Activated T-helper 1 cell treated with anti-CD3 and anti-CD28 coated beads, Interleukin-12 subunit alpha, Interleukin-12 subunit beta, Interleukin-2, Interleukin-4 antibody, amounts not matched to agents 30 ng/mL and 10 ng/mL and 1 ng/mL, durations not matched to agents 14 hours and 24 hours and 36 hours (primary cell): ENCODE measurements at regions of chr6 and their contacts with region 1.

Region 1: GRCh38 chr6:109095027-109095834 is at the start of gene CEP57L1:
- DNase-seq: peak; percentile 91
- H3K4me3 Mint-ChIP-seq: peak within 1 kb of the TSS; percentile 95
- H3K27ac Mint-ChIP-seq: peak within 1 kb of the TSS; percentile 97
- H3K4me1 Mint-ChIP-seq: peaks cover 54% of the 10 kb centered on the region
- H3K27me3 Mint-ChIP-seq: no peaks in the 10 kb centered on the region
- total RNA-seq, gene CEP57L1: 13.5 and 16.3 TPM in 2 replicates

Region 2: GRCh38 chr6:108074359-108075144 is 1020.7 kb before region 1 on chr6 and contains the start of gene OSTM1:
- intact Hi-C with region 1: loop called (anchors 2 kb)
- DNase-seq: peak; percentile 92
- H3K4me3 Mint-ChIP-seq: peak within 1 kb of the TSS; percentile 85
- H3K27ac Mint-ChIP-seq: peak within 1 kb of the TSS; percentile 80
- H3K4me1 Mint-ChIP-seq: peaks cover 12% of the 10 kb centered on the region
- H3K27me3 Mint-ChIP-seq: peaks cover 25% of the 10 kb centered on the region
- total RNA-seq, gene OSTM1: 19.9 and 22.5 TPM in 2 replicates

Region 3: DNA sequence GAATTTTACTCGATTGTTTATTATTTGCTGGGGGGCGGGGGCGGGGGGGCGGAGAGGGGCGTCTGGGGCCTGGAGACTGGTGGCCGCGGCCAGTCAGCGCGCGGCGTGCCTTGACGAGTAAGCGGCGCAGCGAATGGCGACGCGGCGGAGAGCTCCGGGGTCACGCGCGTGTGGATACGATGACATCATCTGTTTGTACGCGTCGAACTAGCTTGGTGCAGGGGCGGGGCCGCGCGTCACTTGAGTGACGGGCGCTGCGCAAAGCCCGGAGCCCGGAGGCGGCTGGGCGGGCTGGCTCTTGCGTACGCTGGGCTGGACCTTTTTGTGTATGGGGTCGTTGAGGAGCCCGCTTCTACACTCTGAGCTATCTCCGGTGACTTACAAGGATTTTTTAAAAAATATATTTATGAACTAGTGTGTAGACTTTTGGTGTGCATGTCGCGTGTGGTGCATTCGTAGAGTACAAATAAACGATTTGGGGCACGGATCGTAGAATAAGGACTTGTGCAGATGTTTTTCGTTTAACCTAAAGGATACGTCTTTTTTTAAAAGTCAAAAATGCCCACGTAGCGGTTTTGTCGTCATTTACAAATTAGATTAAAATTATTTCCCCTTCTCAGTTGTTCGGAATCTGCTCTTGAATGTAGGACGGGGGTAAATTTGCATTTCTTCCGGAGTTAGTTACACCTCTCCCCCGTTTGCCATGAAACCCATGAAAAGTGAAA is 536.7 kb before region 1 on chr6:
- intact Hi-C with region 1: loop called (anchors 1 kb)
- DNase-seq: peak; percentile 95
- H3K4me3 Mint-ChIP-seq: peak overlapping the region; percentile 88
- H3K27ac Mint-ChIP-seq: peak overlapping the region; percentile 91
- H3K4me1 Mint-ChIP-seq: peaks cover 32% of the 10 kb centered on the region
- H3K27me3 Mint-ChIP-seq: peaks cover 47% of the 10 kb centered on the region

Region 4: GRCh38 chr6:109073344-109074132 is 21.7 kb before region 1 on chr6:
- intact Hi-C with region 1: loop called (anchors 2 kb)
- DNase-seq: peak; percentile 31
- H3K4me3 Mint-ChIP-seq: no peak overlapping the region
- H3K27ac Mint-ChIP-seq: no peak overlapping the region
- H3K4me1 Mint-ChIP-seq: peaks cover 21% of the 10 kb centered on the region
- H3K27me3 Mint-ChIP-seq: peaks cover 12% of the 10 kb centered on the region

Region 5: GRCh38 chr6:109455502-109456282 is 360.5 kb after region 1 on chr6 and contains the start of gene MICAL1:
- intact Hi-C with region 1: loop called (anchors 1 kb)
- DNase-seq: peak; percentile 69
- H3K4me3 Mint-ChIP-seq: peak within 1 kb of the TSS; percentile 97
- H3K27ac Mint-ChIP-seq: peak within 1 kb of the TSS; percentile 97
- H3K4me1 Mint-ChIP-seq: peaks cover 59% of the 10 kb centered on the region
- H3K27me3 Mint-ChIP-seq: no peaks in the 10 kb centered on the region
- total RNA-seq, gene MICAL1: 40.8 and 47.1 TPM in 2 replicates

Region 6: DNA sequence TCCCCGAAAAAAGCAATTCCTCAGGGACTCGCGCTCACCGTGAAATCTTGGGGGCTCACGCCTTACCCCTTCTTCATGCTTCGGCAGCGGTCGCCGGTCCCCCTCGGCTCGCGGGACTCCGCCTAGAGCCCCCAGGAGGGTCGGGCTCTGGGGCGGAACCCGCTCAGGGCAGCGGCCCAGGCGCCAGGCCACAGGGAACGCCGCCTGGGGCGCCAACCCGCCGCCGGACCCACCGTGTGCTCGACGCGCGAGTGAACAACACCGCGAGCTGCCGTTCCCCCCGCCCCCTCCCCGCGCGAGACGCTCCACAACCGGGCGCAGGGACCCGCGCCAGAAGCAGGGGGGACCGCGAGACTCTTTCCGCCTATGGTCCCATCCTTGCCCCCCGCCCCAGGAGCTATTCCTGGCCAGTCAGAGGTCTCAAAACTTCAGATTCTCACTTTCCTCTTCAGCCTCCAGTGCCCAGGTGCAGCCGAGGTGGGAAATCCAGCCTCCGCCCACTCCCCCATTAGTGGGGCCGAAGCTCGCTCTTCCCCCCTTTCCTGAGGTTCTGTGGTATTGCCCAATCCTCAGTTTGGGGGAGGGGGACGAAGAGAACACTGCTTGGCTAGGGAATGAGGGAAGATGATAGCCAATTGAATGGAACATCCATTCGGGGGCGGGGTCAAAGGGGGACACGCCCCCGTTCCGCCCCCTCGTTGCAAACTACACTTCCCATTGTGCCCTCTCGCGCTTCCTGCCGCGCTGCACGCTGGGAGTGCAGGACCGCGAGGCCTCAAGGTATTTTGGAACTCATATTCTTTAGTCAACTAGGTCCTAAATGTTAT is 1084.4 kb after region 1 on chr6 and contains the start of gene WASF1:
- intact Hi-C with region 1: loop called (anchors 1 kb)
- DNase-seq: peak; percentile 86
- H3K4me3 Mint-ChIP-seq: peak within 1 kb of the TSS; percentile 79
- H3K27ac Mint-ChIP-seq: peak within 1 kb of the TSS; percentile 35
- H3K4me1 Mint-ChIP-seq: peaks cover 10% of the 10 kb centered on the region
- H3K27me3 Mint-ChIP-seq: peaks cover 15% of the 10 kb centered on the region
- total RNA-seq, gene WASF1: 2.0 and 2.3 TPM in 2 replicates